Stomach (tissue), 19 donors: ENCODE measurements at regions of chr1 and their contacts with region 1.

Region 1: GRCh38 chr1:157193702-157194391 is 55.7 kb upstream of the ETV3 start:
- DNase-seq: peak; percentile 78 to 82
- H3K4me3 ChIP-seq: no peak overlapping the region
- H3K27ac ChIP-seq: no peak overlapping the region
- H3K4me1 ChIP-seq: peaks cover 0 to 18% (median 8%) of the 10 kb centered on the region in 4 donors
- H3K27me3 ChIP-seq: peaks cover 0 to 39% (median 20%) of the 10 kb centered on the region in 3 donors
- CTCF ChIP-seq: peak in 4 of 7 experiments; percentile 36 to 63 (median 58)
- EP300 ChIP-seq: no peak
- POLR2A ChIP-seq: no peak

Region 2: GRCh38 chr1:156728597-156729462 is 465.0 kb before region 1 on chr1 and contains the start of gene ISG20L2:
- intact Hi-C with region 1: no loop called
- DNase-seq: peak; percentile 98 to 99
- H3K4me3 ChIP-seq: peak within 1 kb of the TSS; percentile 67 to 94 (median 78)
- H3K27ac ChIP-seq: peak within 1 kb of the TSS; percentile 86 to 99 (median 99)
- H3K4me1 ChIP-seq: peaks cover 36 to 64% (median 57%) of the 10 kb centered on the region in 4 donors
- H3K27me3 ChIP-seq: no peaks in the 10 kb centered on the region
- CTCF ChIP-seq: no peak
- EP300 ChIP-seq: no peak
- POLR2A ChIP-seq: peak in 1 of 4 donors; percentile 7
- total RNA-seq, gene ISG20L2: 4.5 to 65.5 (median 24.3) TPM

Region 3: DNA sequence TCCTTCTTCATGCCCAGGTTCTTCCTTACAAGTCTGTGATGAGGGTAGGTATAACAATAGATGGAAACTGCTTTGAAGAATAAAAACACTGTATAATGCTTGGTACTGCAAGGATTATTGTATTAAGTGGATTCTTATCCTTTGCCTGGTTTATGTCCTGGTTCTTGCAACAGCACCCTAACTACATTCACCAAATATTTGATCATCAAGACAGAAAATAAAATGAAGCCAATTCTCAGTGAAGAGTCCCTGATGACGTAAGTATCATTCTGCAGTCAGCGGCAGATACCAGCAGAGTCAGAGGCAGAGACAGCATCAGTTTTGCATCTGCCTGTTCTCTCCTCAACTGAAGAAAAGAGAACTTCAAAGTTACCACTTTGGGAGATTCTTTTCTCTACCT is 168.0 kb before region 1 on chr1:
- intact Hi-C with region 1: no loop called
- DNase-seq: peak in 1 of 2 donors; percentile 24
- H3K4me3 ChIP-seq: no peak overlapping the region
- H3K27ac ChIP-seq: peak overlapping the region in 2 of 5 donors; percentile 40 to 45
- H3K4me1 ChIP-seq: peaks cover 0 to 31% (median 20%) of the 10 kb centered on the region in 4 donors
- H3K27me3 ChIP-seq: no peaks in the 10 kb centered on the region
- CTCF ChIP-seq: no peak
- EP300 ChIP-seq: no peak
- POLR2A ChIP-seq: no peak

Region 4: GRCh38 chr1:157288996-157289395 is 95.1 kb after region 1 on chr1:
- intact Hi-C with region 1: no loop called
- DNase-seq: no peak
- H3K4me3 ChIP-seq: no peak overlapping the region
- H3K27ac ChIP-seq: no peak overlapping the region
- H3K4me1 ChIP-seq: peaks cover 0 to 3% (median 0%) of the 10 kb centered on the region in 4 donors
- H3K27me3 ChIP-seq: peaks cover 0 to 7% (median 0%) of the 10 kb centered on the region in 3 donors
- CTCF ChIP-seq: no peak
- EP300 ChIP-seq: no peak
- POLR2A ChIP-seq: no peak

Region 5: GRCh38 chr1:157369808-157370521 is 176.1 kb after region 1 on chr1:
- intact Hi-C with region 1: loop called (anchors 10 kb)
- DNase-seq: peak; percentile 39 to 75
- H3K4me3 ChIP-seq: no peak overlapping the region
- H3K27ac ChIP-seq: no peak overlapping the region
- H3K4me1 ChIP-seq: no peaks in the 10 kb centered on the region
- H3K27me3 ChIP-seq: no peaks in the 10 kb centered on the region
- CTCF ChIP-seq: peak in 5 of 7 experiments; percentile 73 to 91 (median 87)
- EP300 ChIP-seq: no peak
- POLR2A ChIP-seq: no peak